ENCODE measurements at regions of chr3 and their contacts with region 1.

Region 1: DNA sequence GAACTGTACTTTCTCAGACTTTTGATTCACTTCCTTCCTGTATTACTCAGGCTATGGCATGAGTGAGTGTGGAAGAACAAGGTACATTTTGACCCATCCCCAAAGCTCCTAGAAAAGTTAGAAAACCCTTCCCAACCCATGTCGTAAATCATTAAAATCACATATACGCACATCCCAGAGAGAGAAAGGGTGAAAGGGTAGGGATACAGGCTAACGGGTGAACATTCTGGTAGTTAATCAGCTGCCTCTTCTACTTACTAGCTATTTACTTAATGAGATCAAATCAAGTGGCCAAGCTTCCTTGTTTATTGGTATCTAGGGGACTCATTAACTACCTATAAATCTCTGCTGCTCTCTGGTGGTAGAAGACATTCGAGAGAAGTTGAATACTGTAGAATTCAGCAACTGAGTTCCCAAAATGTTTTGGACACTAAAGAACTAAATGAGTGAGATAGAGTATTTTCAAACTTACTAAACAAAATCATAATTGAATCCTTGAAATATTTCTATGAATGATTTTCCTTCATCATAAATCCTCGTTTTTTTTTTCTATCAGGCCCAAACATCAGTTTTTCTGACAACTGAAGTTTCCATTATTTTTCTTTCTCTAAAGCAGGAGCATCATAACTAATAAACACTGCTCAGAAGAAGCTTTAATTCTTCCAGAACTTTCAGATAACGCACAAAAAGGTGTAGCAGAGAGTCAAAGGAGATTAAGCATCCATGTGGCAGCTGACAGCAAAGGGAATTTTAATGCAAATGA is 124.2 kb downstream of the IMPG2 start:
- DNase-seq: peak; percentile 89
- H3K4me3 ChIP-seq: no peak overlapping the region
- H3K27ac ChIP-seq: peak overlapping the region; percentile 81
- H3K4me1 ChIP-seq: peaks cover 23% of the 10 kb centered on the region
- H3K27me3 ChIP-seq: no peaks in the 10 kb centered on the region
- CTCF ChIP-seq: peak; percentile 30 to 42
- POLR2A ChIP-seq: no peak

Region 2: GRCh38 chr3:100743535-100743934 is 452.6 kb before region 1 on chr3:
- CTCF ChIA-PET with region 1: interaction called, 47 read pairs
- POLR2A ChIA-PET with region 1: no interaction called
- dilution Hi-C with region 1: no loop called
- intact Hi-C with region 1: no loop called
- DNase-seq: no peak
- H3K4me3 ChIP-seq: no peak overlapping the region
- H3K27ac ChIP-seq: no peak overlapping the region
- H3K4me1 ChIP-seq: no peaks in the 10 kb centered on the region
- H3K27me3 ChIP-seq: no peaks in the 10 kb centered on the region
- CTCF ChIP-seq: no peak
- POLR2A ChIP-seq: no peak

Region 3: GRCh38 chr3:100865442-100865841 is 330.7 kb before region 1 on chr3:
- CTCF ChIA-PET with region 1: interaction called, 12 read pairs
- POLR2A ChIA-PET with region 1: no interaction called
- dilution Hi-C with region 1: no loop called
- intact Hi-C with region 1: no loop called
- DNase-seq: peak; percentile 26
- H3K4me3 ChIP-seq: no peak overlapping the region
- H3K27ac ChIP-seq: no peak overlapping the region
- H3K4me1 ChIP-seq: no peaks in the 10 kb centered on the region
- H3K27me3 ChIP-seq: no peaks in the 10 kb centered on the region
- CTCF ChIP-seq: no peak
- POLR2A ChIP-seq: no peak

Region 4: DNA sequence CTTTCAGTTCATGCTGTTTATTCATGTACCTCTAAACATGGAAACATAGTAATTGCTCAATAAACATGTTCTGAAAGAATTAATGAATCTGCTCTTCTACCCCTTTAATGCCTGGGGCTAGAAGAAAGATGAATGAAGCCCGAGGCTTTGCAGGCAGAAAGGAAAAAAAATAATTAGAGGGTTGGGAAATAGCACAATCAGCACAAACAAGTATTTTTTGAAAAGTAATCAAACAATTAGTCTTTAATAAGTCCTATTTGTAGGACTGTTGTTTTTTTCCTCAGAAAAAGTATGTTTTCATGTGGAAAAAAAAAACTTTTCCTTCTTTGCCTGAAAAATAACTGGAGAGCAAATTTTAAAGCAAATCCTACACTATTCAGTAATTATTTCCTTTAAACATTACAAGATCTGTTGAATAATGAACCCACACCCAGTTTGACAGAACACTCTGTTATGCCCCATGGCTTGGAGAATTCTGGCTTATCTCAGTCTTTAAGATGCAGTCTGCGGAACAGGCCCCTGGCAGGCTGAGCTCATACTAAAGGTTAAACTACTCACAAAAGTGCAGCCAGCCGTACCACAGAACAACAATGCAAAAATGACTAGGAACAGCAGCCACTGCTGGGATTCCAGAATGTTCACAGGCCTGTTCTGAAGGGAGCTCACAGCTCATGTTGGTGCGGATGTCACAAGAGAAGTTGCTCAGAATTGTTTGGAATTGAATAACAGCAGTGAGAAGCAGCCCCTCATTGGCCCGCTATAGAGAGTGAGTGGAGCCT is 282.1 kb before region 1 on chr3:
- CTCF ChIA-PET with region 1: interaction called, 20 read pairs
- POLR2A ChIA-PET with region 1: no interaction called
- dilution Hi-C with region 1: no loop called
- intact Hi-C with region 1: no loop called
- DNase-seq: peak; percentile 88
- H3K4me3 ChIP-seq: no peak overlapping the region
- H3K27ac ChIP-seq: no peak overlapping the region
- H3K4me1 ChIP-seq: peaks cover 38% of the 10 kb centered on the region
- H3K27me3 ChIP-seq: no peaks in the 10 kb centered on the region
- CTCF ChIP-seq: no peak
- POLR2A ChIP-seq: no peak

Region 5: DNA sequence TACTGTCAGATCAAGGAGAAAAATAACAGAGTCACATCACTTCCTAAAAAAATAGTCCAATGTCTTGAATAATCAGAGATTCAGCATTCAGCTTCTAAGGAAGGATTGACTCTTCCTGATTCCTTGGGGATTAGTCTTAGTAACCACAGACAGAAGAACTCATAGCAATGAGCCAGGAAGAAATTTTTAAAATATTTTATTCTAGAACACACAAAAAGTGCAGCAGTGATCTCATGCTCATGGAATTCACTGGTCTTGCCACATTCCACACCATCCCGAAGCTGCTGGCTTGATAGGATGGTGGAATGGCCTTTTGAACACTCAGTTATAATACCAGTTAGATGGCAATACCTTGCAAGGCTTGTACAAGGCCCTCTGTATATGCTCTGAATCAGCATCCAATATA is 159.9 kb before region 1 on chr3:
- CTCF ChIA-PET with region 1: interaction called, 15 read pairs
- POLR2A ChIA-PET with region 1: no interaction called
- dilution Hi-C with region 1: no loop called
- intact Hi-C with region 1: no loop called
- DNase-seq: peak; percentile 84
- H3K4me3 ChIP-seq: no peak overlapping the region
- H3K27ac ChIP-seq: peak overlapping the region; percentile 79
- H3K4me1 ChIP-seq: peaks cover 18% of the 10 kb centered on the region
- H3K27me3 ChIP-seq: no peaks in the 10 kb centered on the region
- CTCF ChIP-seq: no peak
- POLR2A ChIP-seq: peak; percentile 52

Region 6: DNA sequence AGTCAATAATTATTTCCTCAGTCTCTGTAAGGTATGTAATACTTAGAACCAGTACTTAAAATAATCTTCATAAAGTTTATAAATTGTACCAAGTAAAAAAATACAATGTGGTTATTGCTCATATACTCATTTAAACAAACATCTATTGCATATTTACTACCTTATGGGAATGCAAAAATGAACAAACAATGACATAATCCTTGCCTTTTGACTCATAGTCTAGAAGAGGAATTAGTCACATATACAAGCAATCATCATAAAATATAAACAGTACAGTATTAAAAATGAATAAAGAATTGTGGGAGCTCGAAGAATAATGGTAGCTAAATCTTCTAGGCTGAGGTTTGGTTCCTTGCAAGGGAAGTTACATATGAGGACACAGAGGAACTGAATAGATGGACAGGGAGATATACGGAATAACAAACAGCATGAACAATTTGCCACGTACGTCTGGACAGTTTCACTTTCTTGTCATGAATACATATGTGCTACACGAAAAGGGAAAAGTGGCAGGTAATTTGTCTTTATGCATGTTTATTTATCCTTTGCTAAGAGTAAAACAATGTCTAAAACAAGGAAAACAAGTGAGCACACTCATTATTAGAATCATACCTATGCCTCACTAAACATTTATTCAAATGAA is 107.1 kb after region 1 on chr3:
- CTCF ChIA-PET with region 1: no interaction called
- POLR2A ChIA-PET with region 1: no interaction called
- dilution Hi-C with region 1: no loop called
- intact Hi-C with region 1: no loop called
- DNase-seq: peak; percentile 47
- H3K4me3 ChIP-seq: peak overlapping the region in 1 of 3 experiments; percentile 15
- H3K27ac ChIP-seq: no peak overlapping the region
- H3K4me1 ChIP-seq: no peaks in the 10 kb centered on the region
- H3K27me3 ChIP-seq: no peaks in the 10 kb centered on the region
- CTCF ChIP-seq: no peak
- POLR2A ChIP-seq: no peak

Region 7: GRCh38 chr3:101381809-101382208 is 185.7 kb after region 1 on chr3:
- CTCF ChIA-PET with region 1: interaction called, 22 read pairs
- POLR2A ChIA-PET with region 1: no interaction called
- dilution Hi-C with region 1: no loop called
- intact Hi-C with region 1: no loop called
- DNase-seq: peak; percentile 40
- H3K4me3 ChIP-seq: no peak overlapping the region
- H3K27ac ChIP-seq: no peak overlapping the region
- H3K4me1 ChIP-seq: no peaks in the 10 kb centered on the region
- H3K27me3 ChIP-seq: no peaks in the 10 kb centered on the region
- CTCF ChIP-seq: peak; percentile 7 to 11
- POLR2A ChIP-seq: no peak

Measured in endothelial cell of umbilical vein (primary cell).